Colonic mucosa (tissue), 4 donors: ENCODE measurements at regions of chr12 and their contacts with region 1.

Region 1: GRCh38 chr12:79420146-79420618 is 270.6 kb downstream of the PAWR start:
- DNase-seq: peak; percentile 45
- H3K4me3 ChIP-seq: no peak overlapping the region
- H3K27ac ChIP-seq: peak overlapping the region; percentile 34
- H3K4me1 ChIP-seq: peaks cover 4% of the 10 kb centered on the region
- H3K27me3 ChIP-seq: no peaks in the 10 kb centered on the region
- CTCF ChIP-seq: peak; percentile 32

Region 2: DNA sequence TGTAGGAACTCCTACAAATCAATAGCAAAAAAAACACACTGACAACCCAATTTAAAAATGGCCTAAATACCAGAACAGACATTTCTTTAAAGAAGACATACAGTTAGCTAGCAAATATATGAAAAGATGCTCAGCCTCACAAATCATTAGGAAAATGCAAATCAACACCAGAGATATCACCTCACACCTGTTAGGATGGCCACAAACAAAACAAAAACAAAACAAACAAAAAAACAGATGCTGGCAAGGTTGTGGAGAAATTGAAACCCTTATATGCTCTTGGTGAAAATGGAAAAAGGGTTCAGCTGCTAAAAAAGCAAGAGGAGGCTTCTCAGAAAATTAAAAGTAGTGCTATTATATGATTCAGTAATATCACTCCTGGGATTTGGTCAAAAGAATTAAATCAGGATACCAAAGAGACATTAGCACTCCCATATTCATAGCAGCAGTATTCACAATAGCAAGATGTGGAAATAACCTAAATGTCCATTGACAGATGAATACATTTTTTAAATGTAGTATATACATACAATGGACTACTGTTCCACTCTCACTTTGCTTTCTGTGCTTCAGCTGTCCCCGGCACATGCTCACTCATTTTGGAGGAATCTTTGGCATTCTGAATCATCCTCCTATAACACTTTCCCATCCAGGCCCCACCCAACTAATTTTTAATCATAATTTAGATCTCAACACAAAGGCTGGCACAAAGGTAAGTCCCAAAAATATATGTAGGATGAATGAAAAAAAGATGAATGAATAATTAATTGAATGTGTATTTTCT is 456.6 kb before region 1 on chr12:
- intact Hi-C with region 1: no loop called
- DNase-seq: no peak
- H3K4me3 ChIP-seq: no peak overlapping the region
- H3K27ac ChIP-seq: no peak overlapping the region
- H3K4me1 ChIP-seq: no peaks in the 10 kb centered on the region
- H3K27me3 ChIP-seq: no peaks in the 10 kb centered on the region
- CTCF ChIP-seq: no peak

Region 3: GRCh38 chr12:79547735-79548609 is 127.8 kb after region 1 on chr12:
- intact Hi-C with region 1: loop called (anchors 5 kb)
- DNase-seq: peak; percentile 59
- H3K4me3 ChIP-seq: no peak overlapping the region
- H3K27ac ChIP-seq: peak overlapping the region; percentile 5
- H3K4me1 ChIP-seq: no peaks in the 10 kb centered on the region
- H3K27me3 ChIP-seq: no peaks in the 10 kb centered on the region
- CTCF ChIP-seq: peak; percentile 55

Region 4: DNA sequence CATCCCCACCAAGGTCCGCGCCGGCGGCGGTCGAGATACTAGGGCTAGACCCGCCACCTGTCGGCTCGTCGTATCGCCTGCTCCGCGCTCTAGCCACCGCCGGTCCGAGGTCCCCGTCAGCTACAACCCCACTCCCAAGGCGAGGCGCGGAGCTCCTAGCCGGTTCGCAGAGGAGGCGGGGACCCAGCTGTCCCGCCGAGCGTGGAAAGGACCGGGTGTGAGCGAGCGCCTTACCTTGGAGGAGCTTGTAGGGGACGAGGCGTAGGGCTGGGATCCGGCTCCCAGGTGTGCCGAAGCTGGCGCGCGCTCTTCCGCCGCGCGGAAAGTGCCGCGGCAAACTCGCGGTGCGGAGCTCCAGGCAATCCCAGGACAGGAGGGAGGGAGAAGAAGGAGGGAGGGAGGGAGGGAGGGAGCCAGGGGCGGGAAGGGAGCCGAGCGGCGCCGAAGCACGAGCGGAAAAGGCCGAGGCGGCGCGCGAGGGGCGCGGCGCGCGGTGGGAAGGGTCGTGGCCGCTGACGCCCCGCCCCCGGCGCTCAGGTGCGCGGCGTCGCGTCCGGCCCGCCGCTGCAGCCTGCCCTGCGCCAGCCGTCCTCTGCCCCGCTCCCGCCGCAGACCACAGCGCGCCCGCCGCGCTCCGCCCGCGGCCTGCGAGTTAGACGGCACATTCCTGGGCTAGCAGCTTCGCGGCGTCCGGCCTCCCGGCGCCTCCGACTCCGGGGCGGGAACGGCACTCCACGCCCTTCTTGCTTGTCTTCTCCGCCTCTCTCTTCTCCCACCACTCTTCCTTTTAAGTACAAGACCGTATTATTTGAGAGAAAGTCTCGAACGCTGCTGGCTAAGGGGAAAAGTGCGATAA is 270.7 kb after region 1 on chr12 and contains the start of gene PAWR:
- intact Hi-C with region 1: loop called (anchors 10 kb)
- DNase-seq: peak; percentile 81
- H3K4me3 ChIP-seq: peak within 1 kb of the TSS; percentile 80
- H3K27ac ChIP-seq: peak within 1 kb of the TSS; percentile 95
- H3K4me1 ChIP-seq: no peaks in the 10 kb centered on the region
- H3K27me3 ChIP-seq: no peaks in the 10 kb centered on the region
- CTCF ChIP-seq: no peak
- total RNA-seq, gene PAWR: 135 to 211 TPM